Body of pancreas (tissue), 4 donors: ENCODE measurements at regions of chr2 and their contacts with region 1.

Region 1: DNA sequence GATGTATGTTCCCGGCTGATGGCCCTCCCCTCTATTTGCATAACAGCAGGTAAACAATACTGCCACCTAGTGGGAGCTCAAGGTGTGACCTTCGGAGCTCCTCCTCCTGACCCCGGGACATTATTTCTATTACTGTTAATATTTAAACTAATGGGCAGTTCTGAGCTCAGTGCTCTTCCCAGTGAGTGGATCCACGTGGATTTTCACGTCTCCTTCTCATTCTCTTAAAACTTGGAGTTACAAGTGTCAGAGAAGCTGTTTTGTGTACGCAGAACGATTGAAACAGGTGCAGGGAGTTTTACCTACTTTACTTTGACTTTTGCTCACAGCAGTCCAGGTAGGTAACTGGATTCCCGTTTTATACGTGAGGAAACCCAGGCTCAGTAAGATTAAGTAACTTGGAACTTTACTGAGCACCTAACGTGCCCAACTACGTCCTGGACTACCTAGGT is 127.3 kb downstream of the PRKCE start:
- DNase-seq: peak; percentile 83 to 89 (median 88)
- ATAC-seq: peak; percentile 92
- H3K4me3 ChIP-seq: no peak overlapping the region
- H3K27ac ChIP-seq: peak overlapping the region in 2 of 4 donors; percentile 12 to 20
- H3K4me1 ChIP-seq: peaks cover 6% of the 10 kb centered on the region
- H3K27me3 ChIP-seq: no peaks in the 10 kb centered on the region
- CTCF ChIP-seq: peak; percentile 46 to 89 (median 80)
- POLR2A ChIP-seq: no peak

Region 2: GRCh38 chr2:45643543-45644542 is 134.9 kb before region 1 on chr2:
- intact Hi-C with region 1: loop called (anchors 5 kb)
- DNase-seq: peak; percentile 52 to 75 (median 70)
- ATAC-seq: peak; percentile 93
- H3K4me3 ChIP-seq: no peak overlapping the region
- H3K27ac ChIP-seq: no peak overlapping the region
- H3K4me1 ChIP-seq: peaks cover 21% of the 10 kb centered on the region
- H3K27me3 ChIP-seq: no peaks in the 10 kb centered on the region
- CTCF ChIP-seq: peak; percentile 88 to 99 (median 97)
- POLR2A ChIP-seq: no peak

Region 3: GRCh38 chr2:45935791-45936622 is 157.3 kb after region 1 on chr2:
- intact Hi-C with region 1: loop called (anchors 10 kb)
- DNase-seq: peak; percentile 90 to 96 (median 95)
- ATAC-seq: peak; percentile 81
- H3K4me3 ChIP-seq: no peak overlapping the region
- H3K27ac ChIP-seq: peak overlapping the region in 3 of 4 donors; percentile 4 to 53 (median 7)
- H3K4me1 ChIP-seq: peaks cover 31% of the 10 kb centered on the region
- H3K27me3 ChIP-seq: no peaks in the 10 kb centered on the region
- CTCF ChIP-seq: peak; percentile 58 to 93 (median 89)
- POLR2A ChIP-seq: no peak

Region 4: GRCh38 chr2:46164581-46165301 is 386.0 kb after region 1 on chr2:
- intact Hi-C with region 1: no loop called
- DNase-seq: peak; percentile 29 to 67 (median 47)
- ATAC-seq: peak; percentile 80
- H3K4me3 ChIP-seq: no peak overlapping the region
- H3K27ac ChIP-seq: peak overlapping the region in 1 of 4 donors; percentile 15
- H3K4me1 ChIP-seq: no peaks in the 10 kb centered on the region
- H3K27me3 ChIP-seq: no peaks in the 10 kb centered on the region
- CTCF ChIP-seq: no peak
- POLR2A ChIP-seq: no peak